AG04449 (cell line): ENCODE measurements at regions of chr2 and their contacts with region 1.

Region 1: GRCh38 chr2:26922405-26923188 is 47.8 kb upstream of the MAPRE3 start:
- DNase-seq: no peak
- H3K4me3 ChIP-seq: no peak overlapping the region
- CTCF ChIP-seq: peak; percentile 58

Region 2: DNA sequence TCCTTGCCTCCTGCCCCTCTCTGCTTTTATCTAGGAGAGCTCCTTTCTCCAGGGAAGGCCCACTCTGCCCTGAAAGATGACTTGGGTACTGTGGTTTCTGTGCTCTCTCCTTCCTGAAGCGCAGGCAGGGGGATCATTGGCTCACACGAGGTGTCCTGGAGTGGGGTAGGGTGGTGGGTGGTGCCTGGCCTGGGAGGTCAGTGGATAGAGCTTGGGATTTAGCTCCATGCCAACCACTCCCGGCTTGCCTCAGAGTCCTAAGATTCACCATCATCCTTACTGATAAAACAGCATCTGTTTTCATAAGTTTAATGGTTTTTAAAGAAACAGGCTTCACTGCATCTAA is 344.5 kb before region 1 on chr2:
- CTCF ChIA-PET with region 1: no interaction called
- POLR2A ChIA-PET with region 1: no interaction called
- DNase-seq: no peak
- H3K4me3 ChIP-seq: no peak overlapping the region
- CTCF ChIP-seq: no peak

Region 3: GRCh38 chr2:26911911-26912861 is 10.4 kb before region 1 on chr2:
- CTCF ChIA-PET with region 1: interaction called, 11 read pairs
- POLR2A ChIA-PET with region 1: no interaction called
- DNase-seq: no peak
- H3K4me3 ChIP-seq: no peak overlapping the region
- CTCF ChIP-seq: no peak

Region 4: DNA sequence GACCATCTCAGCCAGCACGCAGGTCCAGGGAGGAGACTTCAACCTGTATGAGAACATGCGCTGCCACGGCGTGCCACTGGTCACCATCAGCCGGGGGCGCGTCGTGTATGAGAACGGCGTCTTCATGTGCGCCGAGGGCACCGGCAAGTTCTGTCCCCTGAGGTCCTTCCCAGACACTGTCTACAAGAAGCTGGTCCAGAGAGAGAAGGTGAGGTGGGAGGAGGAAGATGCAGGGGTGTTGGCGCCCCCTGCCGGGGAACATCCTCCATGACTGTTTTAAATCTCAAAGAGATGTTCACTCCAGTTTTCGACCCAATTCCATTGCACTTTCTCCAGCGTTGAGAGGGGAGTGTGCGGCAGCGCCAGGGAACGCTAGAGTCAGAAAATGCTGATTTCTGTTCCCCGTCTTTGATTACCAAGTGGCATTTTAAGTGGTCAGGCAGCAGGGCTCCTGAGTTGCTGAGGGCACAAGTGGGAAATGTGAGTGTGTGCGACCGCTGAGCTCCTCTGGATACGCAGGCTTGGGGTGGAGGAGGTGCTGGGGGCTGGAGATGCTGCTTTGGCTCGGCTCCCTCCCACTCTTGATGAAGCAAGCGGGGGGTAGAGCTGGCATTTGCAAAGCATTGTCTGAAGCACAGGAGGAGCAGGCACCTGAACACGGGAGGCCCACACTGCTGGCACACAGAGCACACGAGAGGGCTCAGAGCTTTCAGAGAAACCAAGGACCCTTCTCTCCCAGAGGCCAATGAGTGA is 20.1 kb after region 1 on chr2:
- CTCF ChIA-PET with region 1: interaction called, 20 read pairs
- POLR2A ChIA-PET with region 1: no interaction called
- DNase-seq: no peak
- H3K4me3 ChIP-seq: no peak overlapping the region
- CTCF ChIP-seq: peak; percentile 77